Psoas muscle (tissue), 8 donors: ENCODE measurements at regions of chr1 and their contacts with region 1.

Region 1: GRCh38 chr1:227437495-227438008 is 119.3 kb upstream of the CDC42BPA start:
- DNase-seq: no peak
- ATAC-seq: peak; percentile 80 to 93 (median 88)
- H3K4me3 ChIP-seq: peak overlapping the region; percentile 58
- H3K27ac ChIP-seq: no peak overlapping the region
- H3K4me1 ChIP-seq: peaks cover 4% of the 10 kb centered on the region
- H3K27me3 ChIP-seq: no peaks in the 10 kb centered on the region
- CTCF ChIP-seq: peak; percentile 50

Region 2: GRCh38 chr1:226625832-226626576 is 811.5 kb before region 1 on chr1:
- intact Hi-C with region 1: loop called in 1 of 2 experiments (anchors 2 kb)
- DNase-seq: peak in 1 of 2 donors; percentile 44
- ATAC-seq: peak; percentile 15 to 47 (median 32)
- H3K4me3 ChIP-seq: no peak overlapping the region
- H3K27ac ChIP-seq: no peak overlapping the region
- H3K4me1 ChIP-seq: peaks cover 5% of the 10 kb centered on the region
- H3K27me3 ChIP-seq: no peaks in the 10 kb centered on the region
- CTCF ChIP-seq: no peak

Region 3: DNA sequence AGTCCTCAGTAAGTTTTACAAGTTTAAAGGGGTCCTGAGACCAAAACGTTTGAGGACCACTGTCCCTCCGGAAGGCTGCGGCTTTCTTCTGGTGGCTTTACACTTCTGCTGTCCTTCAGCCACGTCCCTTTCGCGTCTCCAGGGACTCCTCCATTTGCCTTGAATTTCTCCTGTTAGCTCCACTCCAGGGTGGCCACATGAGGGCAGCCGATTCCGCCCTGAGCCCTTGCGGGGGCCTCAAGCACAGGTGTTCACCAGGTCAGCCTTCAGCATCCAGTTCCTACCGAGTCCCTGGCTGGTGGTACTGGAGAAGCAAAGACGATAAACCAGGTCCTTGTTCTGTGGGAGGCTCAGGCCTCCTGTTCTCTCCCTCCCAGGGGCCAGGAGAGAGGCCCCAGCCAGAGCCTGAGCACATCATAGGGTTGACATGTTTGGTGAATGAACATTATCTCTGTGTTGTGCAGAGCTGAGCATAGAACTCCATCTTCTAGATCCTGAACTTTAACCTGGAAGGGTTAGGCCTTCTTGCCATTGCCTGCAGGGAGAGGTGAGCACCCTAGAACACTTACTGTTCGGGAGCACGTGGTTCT is 524.9 kb before region 1 on chr1:
- intact Hi-C with region 1: loop called (anchors 5 to 10 kb)
- DNase-seq: peak; percentile 56 to 84
- ATAC-seq: peak; percentile 92 to 97 (median 96)
- H3K4me3 ChIP-seq: no peak overlapping the region
- H3K27ac ChIP-seq: peak overlapping the region; percentile 50
- H3K4me1 ChIP-seq: peaks cover 3% of the 10 kb centered on the region
- H3K27me3 ChIP-seq: no peaks in the 10 kb centered on the region
- CTCF ChIP-seq: peak; percentile 78

Region 4: GRCh38 chr1:227006226-227006796 is 431.2 kb before region 1 on chr1:
- intact Hi-C with region 1: loop called in 1 of 2 experiments (anchors 5 kb)
- DNase-seq: no peak
- ATAC-seq: no peak
- H3K4me3 ChIP-seq: no peak overlapping the region
- H3K27ac ChIP-seq: no peak overlapping the region
- H3K4me1 ChIP-seq: no peaks in the 10 kb centered on the region
- H3K27me3 ChIP-seq: no peaks in the 10 kb centered on the region
- CTCF ChIP-seq: no peak

Region 5: DNA sequence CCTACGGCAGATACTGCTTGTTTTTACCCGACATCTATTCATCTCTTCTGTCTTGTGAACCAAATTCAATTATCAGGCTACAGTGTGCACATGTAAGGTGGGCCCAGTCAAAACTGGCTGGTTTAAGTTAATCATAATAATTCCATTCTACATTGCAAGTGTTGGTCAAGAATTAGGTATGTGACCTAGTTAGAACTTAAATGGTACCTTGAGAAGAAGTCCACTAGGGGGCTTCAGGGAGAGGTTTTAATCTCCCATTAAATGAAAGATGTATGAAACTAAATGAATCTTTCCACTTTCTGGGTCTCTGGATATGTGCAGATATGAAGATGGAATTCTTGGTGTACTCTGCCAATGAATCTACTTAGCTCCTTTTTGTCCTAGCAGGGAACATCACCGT is 306.4 kb before region 1 on chr1:
- intact Hi-C with region 1: loop called (anchors 5 to 10 kb)
- DNase-seq: no peak
- ATAC-seq: peak in 2 of 4 donors; percentile 57 to 63
- H3K4me3 ChIP-seq: no peak overlapping the region
- H3K27ac ChIP-seq: no peak overlapping the region
- H3K4me1 ChIP-seq: no peaks in the 10 kb centered on the region
- H3K27me3 ChIP-seq: no peaks in the 10 kb centered on the region
- CTCF ChIP-seq: peak; percentile 49

Region 6: GRCh38 chr1:227234998-227235405 is 202.6 kb before region 1 on chr1:
- intact Hi-C with region 1: loop called (anchors 2 to 5 kb)
- DNase-seq: no peak
- ATAC-seq: peak; percentile 44 to 84 (median 60)
- H3K4me3 ChIP-seq: no peak overlapping the region
- H3K27ac ChIP-seq: no peak overlapping the region
- H3K4me1 ChIP-seq: no peaks in the 10 kb centered on the region
- H3K27me3 ChIP-seq: no peaks in the 10 kb centered on the region
- CTCF ChIP-seq: peak; percentile 42

Region 7: DNA sequence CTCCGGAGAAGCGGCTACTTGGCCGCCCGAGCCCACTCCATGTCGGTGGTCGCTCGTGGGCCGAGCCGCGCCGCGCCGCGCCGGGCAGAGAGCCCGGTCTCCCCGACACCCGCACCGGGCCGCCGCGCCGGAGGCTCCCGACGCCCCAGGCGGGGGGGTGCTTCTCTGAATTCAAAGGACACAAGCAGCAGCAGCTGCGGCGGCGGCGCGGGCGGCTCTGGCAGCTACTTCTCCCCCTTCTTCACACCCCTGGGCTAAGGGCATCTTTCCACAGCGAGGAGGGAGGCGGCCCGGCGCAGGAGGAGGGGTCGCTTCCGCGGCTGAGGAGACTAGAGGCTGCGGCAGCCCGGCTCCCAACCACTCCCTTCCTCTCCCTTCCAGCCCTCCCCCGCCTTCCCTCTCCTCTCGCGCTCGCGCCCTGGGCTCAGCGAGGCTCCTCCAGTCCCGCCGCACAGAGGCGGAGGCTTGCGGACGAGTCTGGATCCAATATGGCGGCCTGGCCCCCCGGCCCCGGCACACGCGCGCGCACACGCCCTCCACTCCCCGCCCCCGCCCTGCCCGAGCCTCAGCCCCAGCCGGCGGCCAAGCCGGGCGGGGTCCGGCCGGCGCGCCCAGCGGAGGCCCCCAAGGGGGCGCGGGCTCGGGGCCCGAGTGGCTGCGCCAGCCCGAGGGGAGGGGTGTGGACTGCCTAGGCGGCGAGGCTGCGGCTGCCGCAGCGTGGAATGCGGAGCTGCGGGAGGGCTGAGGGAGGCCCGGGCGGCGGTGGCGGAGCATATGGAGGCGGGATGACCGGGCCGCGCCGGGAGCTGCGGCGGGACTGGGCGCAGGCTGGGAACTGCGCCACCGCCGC is 119.3 kb before region 1 on chr1 and contains the start of gene CDC42BPA:
- intact Hi-C with region 1: loop called in 1 of 2 experiments (anchors 5 kb)
- DNase-seq: peak; percentile 86 to 91
- ATAC-seq: peak; percentile 78 to 84 (median 80)
- H3K4me3 ChIP-seq: peak within 1 kb of the TSS; percentile 81
- H3K27ac ChIP-seq: peak within 1 kb of the TSS; percentile 95
- H3K4me1 ChIP-seq: peaks cover 9% of the 10 kb centered on the region
- H3K27me3 ChIP-seq: no peaks in the 10 kb centered on the region
- CTCF ChIP-seq: no peak
- total RNA-seq, gene CDC42BPA: 14.1 to 23.0 (median 20.2) TPM

Region 8: GRCh38 chr1:227378871-227379554 is 58.5 kb before region 1 on chr1:
- intact Hi-C with region 1: no loop called
- DNase-seq: no peak
- ATAC-seq: peak in 3 of 4 donors; percentile 30 to 71 (median 42)
- H3K4me3 ChIP-seq: no peak overlapping the region
- H3K27ac ChIP-seq: no peak overlapping the region
- H3K4me1 ChIP-seq: peaks cover 12% of the 10 kb centered on the region
- H3K27me3 ChIP-seq: no peaks in the 10 kb centered on the region
- CTCF ChIP-seq: no peak